ENCODE measurements at regions of chr5 and their contacts with region 1.

Region 1: DNA sequence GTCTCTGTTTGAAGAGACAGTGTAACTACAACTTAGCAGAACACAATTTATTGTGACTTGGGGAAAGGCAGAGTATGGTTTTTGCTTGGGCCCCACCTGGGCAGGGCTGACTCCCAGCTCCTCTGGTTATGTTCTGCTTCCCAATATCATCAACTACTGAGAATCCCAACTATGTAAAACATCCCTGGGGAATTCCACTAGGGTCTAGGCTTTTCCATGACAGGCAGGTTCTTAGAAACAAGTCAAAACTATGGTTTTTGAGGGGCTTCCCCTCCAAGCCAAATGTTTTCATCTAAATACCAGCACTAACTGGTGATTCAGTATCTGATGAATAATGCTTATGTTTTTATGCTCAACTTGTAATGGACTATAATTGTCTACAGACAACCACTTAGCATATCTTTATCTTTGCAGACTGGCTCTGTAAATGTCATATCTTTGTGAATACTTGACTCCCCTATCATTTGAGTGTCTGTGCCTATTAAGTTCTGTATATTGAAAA is 409.5 kb downstream of the PDE4D start:
- DNase-seq: peak; percentile 25
- H3K4me3 Mint-ChIP-seq: no peak overlapping the region
- H3K27ac Mint-ChIP-seq: peak overlapping the region; percentile 17
- H3K4me1 Mint-ChIP-seq: peaks cover 19% of the 10 kb centered on the region
- H3K27me3 Mint-ChIP-seq: peaks cover 2% of the 10 kb centered on the region

Region 2: DNA sequence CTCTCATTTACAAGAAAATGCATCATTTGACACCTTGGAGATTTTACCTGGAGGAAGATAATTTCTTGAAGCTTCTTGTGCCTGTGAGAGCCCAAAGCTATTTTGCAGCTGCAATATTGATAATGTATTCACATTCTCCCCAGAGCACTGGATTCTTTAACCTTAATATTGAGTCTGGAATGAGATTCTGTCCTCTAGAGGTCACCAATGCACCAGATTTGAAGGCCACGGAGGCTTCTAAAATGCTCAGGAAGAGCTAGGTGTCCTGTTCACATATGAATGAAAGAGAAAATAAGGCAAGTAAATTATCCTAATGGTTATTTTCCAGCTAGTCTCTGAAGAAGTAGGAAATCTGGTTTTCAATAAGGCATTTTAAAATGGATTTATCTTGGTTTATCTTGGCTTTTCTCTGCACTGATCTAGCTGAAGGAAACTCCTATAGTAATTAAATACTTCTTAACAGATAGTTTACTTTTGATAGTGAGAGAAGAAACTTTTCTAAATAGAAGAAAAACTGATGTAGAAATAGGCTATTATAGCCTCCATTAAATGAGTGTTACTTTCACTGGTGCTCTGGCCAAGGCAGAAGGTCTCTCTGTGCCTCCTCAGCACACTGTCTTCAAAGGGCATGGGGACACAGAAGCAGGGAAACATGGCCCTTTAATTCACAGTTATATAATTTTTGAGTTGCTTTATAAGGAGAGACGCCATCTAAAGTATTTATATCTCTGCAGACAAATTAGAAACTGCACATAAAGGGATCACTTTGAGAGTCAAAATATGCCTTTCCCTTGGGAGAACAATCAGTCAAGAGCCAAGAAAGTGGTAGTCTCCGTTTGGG is 1704.4 kb before region 1 on chr5:
- CTCF ChIA-PET with region 1: no interaction called
- intact Hi-C with region 1: no loop called
- DNase-seq: peak; percentile 52
- H3K4me3 Mint-ChIP-seq: no peak overlapping the region
- H3K27ac Mint-ChIP-seq: no peak overlapping the region
- H3K4me1 Mint-ChIP-seq: no peaks in the 10 kb centered on the region
- H3K27me3 Mint-ChIP-seq: peaks cover 6% of the 10 kb centered on the region

Region 3: GRCh38 chr5:59591162-59591561 is 107.1 kb after region 1 on chr5:
- CTCF ChIA-PET with region 1: no interaction called
- intact Hi-C with region 1: loop called (anchors 1 kb)
- DNase-seq: no peak
- H3K4me3 Mint-ChIP-seq: no peak overlapping the region
- H3K27ac Mint-ChIP-seq: no peak overlapping the region
- H3K4me1 Mint-ChIP-seq: peaks cover 10% of the 10 kb centered on the region
- H3K27me3 Mint-ChIP-seq: peaks cover 19% of the 10 kb centered on the region

Region 4: GRCh38 chr5:59608745-59609144 is 124.7 kb after region 1 on chr5:
- CTCF ChIA-PET with region 1: no interaction called
- intact Hi-C with region 1: loop called (anchors 1 kb)
- DNase-seq: peak; percentile 21
- H3K4me3 Mint-ChIP-seq: no peak overlapping the region
- H3K27ac Mint-ChIP-seq: peak overlapping the region; percentile 38
- H3K4me1 Mint-ChIP-seq: peaks cover 13% of the 10 kb centered on the region
- H3K27me3 Mint-ChIP-seq: peaks cover 14% of the 10 kb centered on the region

Region 5: GRCh38 chr5:59685793-59686192 is 201.8 kb after region 1 on chr5:
- CTCF ChIA-PET with region 1: no interaction called
- intact Hi-C with region 1: no loop called
- DNase-seq: no peak
- H3K4me3 Mint-ChIP-seq: no peak overlapping the region
- H3K27ac Mint-ChIP-seq: no peak overlapping the region
- H3K4me1 Mint-ChIP-seq: no peaks in the 10 kb centered on the region
- H3K27me3 Mint-ChIP-seq: no peaks in the 10 kb centered on the region

Region 6: GRCh38 chr5:59760798-59761348 is 276.9 kb after region 1 on chr5:
- CTCF ChIA-PET with region 1: no interaction called
- intact Hi-C with region 1: loop called (anchors 2 kb)
- DNase-seq: peak; percentile 49
- H3K4me3 Mint-ChIP-seq: no peak overlapping the region
- H3K27ac Mint-ChIP-seq: no peak overlapping the region
- H3K4me1 Mint-ChIP-seq: peaks cover 6% of the 10 kb centered on the region
- H3K27me3 Mint-ChIP-seq: peaks cover 6% of the 10 kb centered on the region